Posterior vena cava (tissue), 2 donors: ENCODE measurements at regions of chr3 and their contacts with region 1.

Region 1: GRCh38 chr3:12054256-12054655 is 50.1 kb downstream of the SYN2 start:
- DNase-seq: no peak

Region 2: GRCh38 chr3:11705049-11705448 is 349.2 kb before region 1 on chr3:
- intact Hi-C with region 1: loop called in 1 of 2 experiments (anchors 5 kb)
- DNase-seq: no peak